ENCODE measurements at regions of chr1 and their contacts with region 1.

Region 1: GRCh38 chr1:38873027-38873969 is at the start of gene MYCBP:
- DNase-seq: peak; percentile 95 to 99 (median 98)
- ATAC-seq: peak; percentile 100
- H3K4me3 ChIP-seq: peak within 1 kb of the TSS; percentile 90
- H3K4me3 Mint-ChIP-seq: peak within 1 kb of the TSS; percentile 83 to 96 (median 92)
- H3K27ac ChIP-seq: peak within 1 kb of the TSS; percentile 90
- H3K27ac Mint-ChIP-seq: peak within 1 kb of the TSS; percentile 75 to 97 (median 87)
- H3K4me1 ChIP-seq: peaks cover 10 to 16% of the 10 kb centered on the region in 2 donors
- H3K4me1 Mint-ChIP-seq: peaks cover 13 to 40% (median 30%) of the 10 kb centered on the region in 7 donors
- H3K27me3 ChIP-seq: no peaks in the 10 kb centered on the region
- H3K27me3 Mint-ChIP-seq: no peaks in the 10 kb centered on the region
- total RNA-seq, gene MYCBP: 6.1 to 38.2 (median 11.7) TPM

Region 2: GRCh38 chr1:37553927-37554808 is 1319.1 kb before region 1 on chr1 and contains the start of gene SNIP1:
- CTCF ChIA-PET with region 1: no interaction called
- POLR2A ChIA-PET with region 1: no interaction called
- intact Hi-C with region 1: loop called in 1 of 2 experiments (anchors 1 kb)
- DNase-seq: peak; percentile 67 to 94 (median 92)
- ATAC-seq: peak; percentile 99
- H3K4me3 ChIP-seq: peak within 1 kb of the TSS; percentile 92
- H3K4me3 Mint-ChIP-seq: peak within 1 kb of the TSS; percentile 97 to 100 (median 99)
- H3K27ac ChIP-seq: peak within 1 kb of the TSS; percentile 94
- H3K27ac Mint-ChIP-seq: peak within 1 kb of the TSS; percentile 91 to 99 (median 98)
- H3K4me1 ChIP-seq: peaks cover 10 to 24% of the 10 kb centered on the region in 2 donors
- H3K4me1 Mint-ChIP-seq: peaks cover 23 to 51% (median 45%) of the 10 kb centered on the region in 7 donors
- H3K27me3 ChIP-seq: no peaks in the 10 kb centered on the region
- H3K27me3 Mint-ChIP-seq: peaks cover 0 to 6% (median 0%) of the 10 kb centered on the region in 5 donors
- total RNA-seq, gene SNIP1: 27.8 to 53.6 (median 36.7) TPM

Region 3: DNA sequence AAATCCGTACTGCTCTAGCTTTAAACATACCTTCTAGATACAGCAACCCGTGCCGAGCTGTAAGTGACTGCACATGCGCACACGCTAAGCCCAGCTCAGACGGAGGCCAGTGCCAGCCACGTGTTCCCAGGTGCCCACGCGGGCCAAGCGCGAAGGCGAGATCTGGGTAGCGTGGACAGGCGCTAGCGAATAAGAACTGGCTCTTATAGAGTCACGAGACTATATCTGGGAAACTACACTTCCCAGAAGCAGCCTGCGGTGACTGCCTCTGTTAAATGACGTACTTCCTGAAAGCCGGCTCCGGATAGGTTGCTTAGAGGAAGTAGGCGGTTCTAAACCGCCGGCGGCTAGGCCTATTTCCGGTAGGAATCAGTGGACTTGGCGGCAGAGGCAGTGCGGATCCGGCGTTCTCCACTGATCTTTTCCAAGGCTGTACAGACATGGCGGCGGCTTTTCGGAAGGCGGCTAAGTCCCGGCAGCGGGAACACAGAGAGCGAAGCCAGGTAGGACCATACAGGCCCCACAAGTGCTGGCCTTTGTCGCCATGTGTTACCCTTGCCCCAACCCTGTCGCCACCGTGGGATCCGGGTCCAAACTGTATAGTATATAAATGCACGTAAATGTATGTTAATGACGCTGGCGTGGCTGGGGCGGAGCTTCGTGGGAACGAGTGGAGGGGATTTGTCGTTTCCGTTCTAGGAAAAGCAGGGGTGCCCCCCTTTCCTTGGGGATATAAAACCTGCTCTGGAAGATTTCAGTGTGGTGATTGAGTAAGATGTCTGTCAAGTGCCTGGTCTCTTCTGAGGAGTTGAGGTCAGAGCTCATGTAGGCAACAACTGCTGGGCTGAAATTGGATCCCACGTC is 860.7 kb before region 1 on chr1 and contains the start of gene UTP11:
- CTCF ChIA-PET with region 1: no interaction called
- POLR2A ChIA-PET with region 1: interaction called, 3 read pairs
- intact Hi-C with region 1: loop called in 1 of 2 experiments (anchors 1 kb)
- DNase-seq: peak; percentile 63 to 95 (median 93)
- ATAC-seq: peak; percentile 97
- H3K4me3 ChIP-seq: peak within 1 kb of the TSS; percentile 84
- H3K4me3 Mint-ChIP-seq: peak within 1 kb of the TSS; percentile 96 to 99 (median 99)
- H3K27ac ChIP-seq: peak within 1 kb of the TSS; percentile 87
- H3K27ac Mint-ChIP-seq: peak within 1 kb of the TSS; percentile 95 to 99 (median 97)
- H3K4me1 ChIP-seq: peaks cover 10 to 14% of the 10 kb centered on the region in 2 donors
- H3K4me1 Mint-ChIP-seq: peaks cover 25 to 70% (median 47%) of the 10 kb centered on the region in 7 donors
- H3K27me3 ChIP-seq: no peaks in the 10 kb centered on the region
- H3K27me3 Mint-ChIP-seq: no peaks in the 10 kb centered on the region
- total RNA-seq, gene UTP11: 8.2 to 42.8 (median 15.7) TPM

Region 4: GRCh38 chr1:38973659-38974424 is 100.5 kb after region 1 on chr1:
- CTCF ChIA-PET with region 1: no interaction called
- POLR2A ChIA-PET with region 1: interaction called, 6 read pairs
- intact Hi-C with region 1: loop called (anchors 5 kb)
- DNase-seq: no peak
- ATAC-seq: no peak
- H3K4me3 ChIP-seq: no peak overlapping the region
- H3K4me3 Mint-ChIP-seq: no peak overlapping the region
- H3K27ac ChIP-seq: no peak overlapping the region
- H3K27ac Mint-ChIP-seq: peak overlapping the region in 1 of 9 donors; percentile 38
- H3K4me1 ChIP-seq: peaks cover 0 to 14% of the 10 kb centered on the region in 2 donors
- H3K4me1 Mint-ChIP-seq: peaks cover 2 to 25% (median 15%) of the 10 kb centered on the region in 7 donors
- H3K27me3 ChIP-seq: no peaks in the 10 kb centered on the region
- H3K27me3 Mint-ChIP-seq: peaks cover 0 to 2% (median 0%) of the 10 kb centered on the region in 5 donors

Region 5: DNA sequence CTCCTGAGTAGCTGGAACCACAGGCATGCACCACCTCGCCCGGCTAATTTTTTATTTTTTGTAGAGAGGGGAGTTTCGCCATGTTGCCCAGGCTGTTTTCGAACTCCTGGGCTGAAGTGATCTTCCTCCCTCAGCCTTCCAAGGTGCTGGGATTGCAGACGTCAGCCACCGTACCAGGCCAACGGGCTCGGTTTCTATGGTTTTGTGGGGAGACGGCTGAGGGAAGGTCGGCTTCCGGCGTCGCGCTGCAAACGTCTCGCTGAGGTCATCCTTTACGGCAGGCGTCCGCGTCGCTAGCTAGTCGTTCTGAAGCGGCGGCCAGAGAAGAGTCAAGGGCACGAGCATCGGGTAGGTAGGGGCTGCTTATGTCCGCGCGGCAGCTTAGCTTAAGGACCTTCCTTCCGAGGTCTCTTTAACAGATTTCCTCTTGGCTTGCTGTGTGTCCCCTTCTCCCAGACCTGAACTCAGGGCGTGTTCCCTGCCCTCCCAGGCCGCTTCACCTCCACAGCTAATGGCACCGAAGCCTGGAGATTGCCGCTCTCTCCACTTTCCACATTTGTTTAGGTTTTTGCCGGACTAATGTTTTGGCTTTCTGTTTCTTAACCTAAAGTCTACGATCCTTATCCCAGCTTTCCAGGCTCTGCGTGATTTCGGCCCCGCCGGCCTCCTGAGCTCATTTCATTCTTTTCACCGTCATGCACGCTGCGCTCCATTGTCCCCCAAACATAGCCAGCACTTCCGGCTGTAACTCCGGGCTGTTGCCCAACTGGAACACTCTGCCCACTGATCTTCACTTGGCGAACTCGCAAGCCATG is 153.0 kb after region 1 on chr1 and contains the start of gene NDUFS5:
- CTCF ChIA-PET with region 1: interaction called, 3 read pairs
- POLR2A ChIA-PET with region 1: interaction called, 4 read pairs
- intact Hi-C with region 1: loop called (anchors 1 kb)
- DNase-seq: peak; percentile 53 to 84 (median 80)
- ATAC-seq: peak; percentile 96
- H3K4me3 ChIP-seq: peak within 1 kb of the TSS; percentile 93
- H3K4me3 Mint-ChIP-seq: peak within 1 kb of the TSS; percentile 90 to 100 (median 96)
- H3K27ac ChIP-seq: peak within 1 kb of the TSS; percentile 94
- H3K27ac Mint-ChIP-seq: peak within 1 kb of the TSS; percentile 93 to 99 (median 97)
- H3K4me1 ChIP-seq: peaks cover 18% of the 10 kb centered on the region in 2 donors
- H3K4me1 Mint-ChIP-seq: peaks cover 19 to 37% (median 28%) of the 10 kb centered on the region in 7 donors
- H3K27me3 ChIP-seq: no peaks in the 10 kb centered on the region
- H3K27me3 Mint-ChIP-seq: peaks cover 0 to 6% (median 0%) of the 10 kb centered on the region in 5 donors
- total RNA-seq, gene NDUFS5: 95.1 to 128 (median 115) TPM

Region 6: DNA sequence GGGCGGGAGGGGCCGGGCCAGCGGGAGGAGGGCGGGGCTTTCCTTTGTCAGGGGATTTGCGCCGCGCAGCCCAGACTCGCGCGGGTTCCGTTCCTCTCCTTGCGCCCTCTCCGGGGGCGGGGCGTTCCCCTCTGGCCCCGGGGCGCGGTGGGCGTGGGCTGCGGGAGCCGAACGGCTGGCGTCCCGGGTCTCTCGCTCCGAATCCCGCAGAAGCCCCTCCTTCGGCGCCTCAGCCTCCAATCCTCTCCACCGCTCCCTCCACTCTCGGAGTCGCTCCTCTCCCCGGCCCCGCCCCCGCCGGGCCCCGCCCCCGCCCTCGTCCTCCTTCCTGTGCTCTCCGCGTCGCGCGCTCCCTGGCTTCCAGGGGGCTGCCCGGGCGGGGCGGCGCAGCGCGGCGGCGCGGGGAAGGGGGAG is 535.4 kb after region 1 on chr1:
- CTCF ChIA-PET with region 1: no interaction called
- POLR2A ChIA-PET with region 1: no interaction called
- intact Hi-C with region 1: loop called in 1 of 2 experiments (anchors 10 kb)
- DNase-seq: peak; percentile 59 to 89 (median 72)
- ATAC-seq: peak; percentile 92
- H3K4me3 ChIP-seq: peak overlapping the region; percentile 54
- H3K4me3 Mint-ChIP-seq: peak overlapping the region in 8 of 10 donors; percentile 81 to 94 (median 90)
- H3K27ac ChIP-seq: peak overlapping the region; percentile 73
- H3K27ac Mint-ChIP-seq: peak overlapping the region in 2 of 9 donors; percentile 59 to 88
- H3K4me1 ChIP-seq: peaks cover 16 to 34% of the 10 kb centered on the region in 2 donors
- H3K4me1 Mint-ChIP-seq: peaks cover 36 to 69% (median 63%) of the 10 kb centered on the region in 7 donors
- H3K27me3 ChIP-seq: no peaks in the 10 kb centered on the region
- H3K27me3 Mint-ChIP-seq: no peaks in the 10 kb centered on the region

Region 7: DNA sequence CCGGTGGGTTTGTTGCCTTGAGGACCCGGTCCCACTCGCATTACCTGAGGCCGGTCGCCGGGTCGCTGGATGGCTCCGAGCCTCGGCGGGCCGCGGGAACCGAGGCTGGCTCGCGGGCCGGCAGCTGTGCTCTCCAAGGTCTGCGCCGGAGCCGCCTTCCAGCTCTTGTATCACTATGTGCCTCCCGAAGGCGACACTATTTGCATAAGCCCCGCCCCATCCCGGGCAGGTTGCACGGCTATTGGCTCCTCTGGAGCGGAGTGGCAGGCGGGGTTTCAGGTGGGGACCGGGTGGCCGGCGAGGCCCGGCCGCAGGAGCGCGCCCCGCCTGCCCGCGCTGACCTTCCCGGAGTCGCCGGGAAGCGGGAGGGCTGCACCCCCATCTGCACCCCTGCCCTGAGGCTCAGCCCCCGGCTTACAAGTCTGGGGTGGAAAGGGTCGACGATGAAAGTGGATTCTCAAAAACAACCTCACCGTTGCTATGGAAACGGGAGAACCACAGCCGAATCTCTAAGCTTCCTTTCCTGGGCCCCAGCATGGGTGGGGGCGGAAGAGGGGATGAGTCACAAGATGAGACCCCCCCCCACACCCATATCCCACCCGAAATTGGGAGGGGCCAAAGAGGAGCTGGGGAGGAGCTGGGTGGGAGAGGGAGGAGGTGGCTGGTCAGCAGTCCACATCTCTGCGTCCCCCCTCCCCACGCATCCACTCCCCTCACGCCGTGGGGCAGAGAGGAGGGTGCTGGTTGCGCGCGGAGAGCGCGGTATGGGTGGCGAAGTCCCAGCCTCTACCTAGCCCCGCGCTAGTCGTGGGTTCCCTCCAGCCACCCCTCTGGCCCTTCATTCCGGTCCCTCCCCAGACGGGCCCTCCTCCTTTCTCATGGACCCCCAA is 818.2 kb after region 1 on chr1 and contains the start of gene HPCAL4:
- CTCF ChIA-PET with region 1: no interaction called
- POLR2A ChIA-PET with region 1: interaction called, 3 read pairs
- intact Hi-C with region 1: loop called in 1 of 2 experiments (anchors 5 kb)
- DNase-seq: peak; percentile 79 to 93 (median 88)
- ATAC-seq: peak; percentile 93
- H3K4me3 ChIP-seq: peak within 1 kb of the TSS; percentile 89
- H3K4me3 Mint-ChIP-seq: peak within 1 kb of the TSS; percentile 71 to 90 (median 86)
- H3K27ac ChIP-seq: peak within 1 kb of the TSS; percentile 69
- H3K27ac Mint-ChIP-seq: peak within 1 kb of the TSS; percentile 60 to 93 (median 84)
- H3K4me1 ChIP-seq: peaks cover 21 to 36% of the 10 kb centered on the region in 2 donors
- H3K4me1 Mint-ChIP-seq: peaks cover 22 to 48% (median 28%) of the 10 kb centered on the region in 7 donors
- H3K27me3 ChIP-seq: no peaks in the 10 kb centered on the region
- H3K27me3 Mint-ChIP-seq: peaks cover 0 to 63% (median 13%) of the 10 kb centered on the region in 5 donors
- total RNA-seq, gene HPCAL4: 2.9 to 49.0 (median 18.7) TPM